ENCODE measurements at regions of chr6 and their contacts with region 1.

Region 1: GRCh38 chr6:39865011-39865888 is 69.0 kb downstream of the MOCS1 start:
- DNase-seq: peak; percentile 31
- H3K4me3 ChIP-seq: no peak overlapping the region
- H3K27ac ChIP-seq: no peak overlapping the region
- H3K4me1 ChIP-seq: no peaks in the 10 kb centered on the region
- H3K27me3 ChIP-seq: no peaks in the 10 kb centered on the region
- CTCF ChIP-seq: peak; percentile 69 to 82

Region 2: DNA sequence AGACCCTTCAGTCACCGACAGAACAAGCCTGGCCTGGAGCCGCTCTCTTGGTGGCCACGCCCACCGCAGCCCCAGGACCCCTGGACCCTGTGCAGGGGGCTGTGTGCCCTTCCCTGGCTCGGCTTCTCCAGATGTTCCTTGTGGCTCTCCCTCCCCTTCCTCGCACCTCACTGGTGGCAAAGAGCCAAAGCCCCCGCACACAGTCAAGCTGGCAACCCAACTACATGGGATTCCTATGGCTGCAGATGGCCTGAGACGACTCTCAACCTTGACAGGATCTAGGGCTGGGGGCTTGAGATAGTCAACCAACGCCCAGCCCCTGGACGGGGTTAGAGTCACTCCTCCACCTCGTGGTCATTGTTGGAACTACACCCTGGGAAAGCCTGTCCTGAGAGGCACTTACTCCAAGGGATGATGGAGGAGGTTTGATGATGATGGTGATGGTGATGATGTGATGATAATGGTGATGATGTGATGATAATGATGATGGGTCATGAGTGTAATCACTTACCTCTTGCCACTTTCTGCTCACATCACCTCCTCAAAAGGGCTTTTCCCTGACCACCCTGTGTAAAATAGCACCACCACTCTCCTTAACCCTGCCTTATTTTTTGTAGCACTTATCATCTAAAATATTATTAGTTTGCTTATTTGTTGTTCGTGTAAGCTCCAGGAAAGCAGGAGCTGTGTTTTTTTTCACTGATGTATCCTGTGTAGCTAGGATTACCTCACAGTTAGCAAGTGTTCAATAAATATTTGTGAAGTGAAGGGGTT is 443.5 kb after region 1 on chr6:
- CTCF ChIA-PET with region 1: no interaction called
- dilution Hi-C with region 1: no loop called
- in situ Hi-C with region 1: no loop called
- intact Hi-C with region 1: loop called (anchors 5 kb)
- DNase-seq: peak; percentile 45
- H3K4me3 ChIP-seq: no peak overlapping the region
- H3K27ac ChIP-seq: no peak overlapping the region
- H3K4me1 ChIP-seq: peaks cover 3% of the 10 kb centered on the region
- H3K27me3 ChIP-seq: no peaks in the 10 kb centered on the region
- CTCF ChIP-seq: peak; percentile 86 to 95